ENCODE measurements at regions of chr15 and their contacts with region 1.

Region 1: DNA sequence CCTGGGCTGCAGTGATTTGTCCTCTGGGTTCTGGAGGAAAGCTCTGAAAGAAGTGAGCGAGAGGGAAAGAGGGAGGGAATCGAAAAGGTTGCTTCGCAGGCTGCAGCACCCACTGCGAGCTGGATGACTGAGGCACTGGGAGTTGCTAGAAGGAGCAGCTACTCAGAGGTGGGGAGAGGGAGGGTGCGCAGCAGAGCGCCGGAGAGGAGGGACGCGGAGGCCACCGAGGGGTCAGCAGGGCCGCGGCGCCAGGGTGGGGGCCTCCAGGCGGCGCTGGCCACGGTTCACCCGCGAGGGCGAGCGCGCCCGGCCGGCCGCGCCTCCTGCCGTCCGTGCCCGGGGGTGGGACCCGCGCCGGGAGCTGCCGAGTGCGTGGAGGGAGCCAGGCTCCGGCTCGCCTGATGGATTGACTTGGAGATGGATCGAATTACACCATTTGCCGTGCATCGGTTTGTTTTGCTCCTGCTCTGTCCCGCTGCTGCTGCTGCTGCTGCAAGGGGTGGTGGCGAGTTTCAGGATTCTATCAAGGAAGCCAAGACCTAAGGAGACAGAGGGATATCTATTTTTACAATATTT is at the start of gene SEMA6D:
- DNase-seq: peak; percentile 90
- H3K4me3 ChIP-seq: peak within 1 kb of the TSS; percentile 76
- H3K27ac ChIP-seq: peak within 1 kb of the TSS; percentile 69
- H3K4me1 ChIP-seq: peaks cover 50% of the 10 kb centered on the region
- H3K27me3 ChIP-seq: no peaks in the 10 kb centered on the region
- CTCF ChIP-seq: no peak; the same call in 1 of the 2 replicates
- total RNA-seq, gene SEMA6D: 10.9 and 11.0 TPM in 2 replicates

Region 2: GRCh38 chr15:47422901-47423665 is 294.0 kb before region 1 on chr15:
- CTCF ChIA-PET with region 1: interaction called, 3 read pairs
- POLR2A ChIA-PET with region 1: no interaction called
- intact Hi-C with region 1: loop called (anchors 5 kb)
- DNase-seq: no peak
- H3K4me3 ChIP-seq: no peak overlapping the region
- H3K27ac ChIP-seq: peak overlapping the region; percentile 84
- H3K4me1 ChIP-seq: peaks cover 68% of the 10 kb centered on the region
- H3K27me3 ChIP-seq: no peaks in the 10 kb centered on the region
- CTCF ChIP-seq: no peak

Region 3: GRCh38 chr15:47473832-47474231 is 243.3 kb before region 1 on chr15:
- CTCF ChIA-PET with region 1: interaction called, 3 read pairs
- POLR2A ChIA-PET with region 1: no interaction called
- intact Hi-C with region 1: loop called (anchors 10 kb)
- DNase-seq: no peak
- H3K4me3 ChIP-seq: no peak overlapping the region
- H3K27ac ChIP-seq: no peak overlapping the region
- H3K4me1 ChIP-seq: peaks cover 29% of the 10 kb centered on the region
- H3K27me3 ChIP-seq: no peaks in the 10 kb centered on the region
- CTCF ChIP-seq: no peak

Region 4: GRCh38 chr15:47778263-47778770 is 61.2 kb after region 1 on chr15:
- CTCF ChIA-PET with region 1: no interaction called
- POLR2A ChIA-PET with region 1: no interaction called
- intact Hi-C with region 1: loop called (anchors 2 kb)
- DNase-seq: no peak
- H3K4me3 ChIP-seq: no peak overlapping the region
- H3K27ac ChIP-seq: no peak overlapping the region
- H3K4me1 ChIP-seq: no peaks in the 10 kb centered on the region
- H3K27me3 ChIP-seq: no peaks in the 10 kb centered on the region
- CTCF ChIP-seq: no peak

Region 5: DNA sequence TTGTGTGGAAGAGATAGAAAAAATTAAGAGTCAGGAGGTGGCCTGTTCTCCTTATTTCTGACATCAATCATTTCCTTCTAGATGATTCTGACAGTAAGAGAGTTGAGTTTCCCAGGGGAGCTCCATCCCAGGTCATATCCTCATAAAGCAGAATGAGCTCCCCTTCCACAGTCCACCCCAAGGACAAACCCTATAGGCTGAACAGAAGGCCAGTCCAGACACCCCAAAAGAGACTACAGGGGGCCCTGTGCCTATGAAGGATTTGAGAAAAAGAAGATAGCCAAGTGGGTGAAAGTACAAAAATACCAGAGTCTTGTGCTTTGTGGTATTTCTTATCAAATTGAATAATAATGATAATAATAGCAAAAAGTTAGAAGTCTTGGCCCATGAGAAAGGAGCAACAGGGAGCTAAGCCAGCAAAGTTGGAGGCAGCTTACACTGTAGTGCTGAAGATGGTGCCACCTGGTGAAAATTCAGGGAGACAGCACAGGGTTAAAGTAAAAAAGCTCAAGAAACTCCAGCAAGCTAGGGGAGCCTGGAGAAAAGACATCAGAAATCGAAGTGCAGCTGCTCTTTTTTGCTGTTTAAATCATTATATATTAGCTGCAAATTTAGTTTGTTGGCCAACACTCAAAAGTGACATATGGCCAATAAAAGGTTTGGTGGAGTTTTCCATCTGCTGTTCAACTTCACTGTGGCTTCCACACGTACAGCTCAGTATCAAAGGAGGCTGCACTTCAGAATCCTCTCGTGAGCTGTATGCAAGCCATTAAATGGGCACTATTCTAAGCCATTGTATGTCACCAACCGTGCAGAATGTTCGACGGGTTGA is 367.9 kb after region 1 on chr15:
- CTCF ChIA-PET with region 1: interaction called, 4 read pairs
- POLR2A ChIA-PET with region 1: no interaction called
- intact Hi-C with region 1: loop called (anchors 10 kb)
- DNase-seq: peak; percentile 73
- H3K4me3 ChIP-seq: no peak overlapping the region
- H3K27ac ChIP-seq: no peak overlapping the region
- H3K4me1 ChIP-seq: no peaks in the 10 kb centered on the region
- H3K27me3 ChIP-seq: no peaks in the 10 kb centered on the region
- CTCF ChIP-seq: peak; percentile 75

Region 6: DNA sequence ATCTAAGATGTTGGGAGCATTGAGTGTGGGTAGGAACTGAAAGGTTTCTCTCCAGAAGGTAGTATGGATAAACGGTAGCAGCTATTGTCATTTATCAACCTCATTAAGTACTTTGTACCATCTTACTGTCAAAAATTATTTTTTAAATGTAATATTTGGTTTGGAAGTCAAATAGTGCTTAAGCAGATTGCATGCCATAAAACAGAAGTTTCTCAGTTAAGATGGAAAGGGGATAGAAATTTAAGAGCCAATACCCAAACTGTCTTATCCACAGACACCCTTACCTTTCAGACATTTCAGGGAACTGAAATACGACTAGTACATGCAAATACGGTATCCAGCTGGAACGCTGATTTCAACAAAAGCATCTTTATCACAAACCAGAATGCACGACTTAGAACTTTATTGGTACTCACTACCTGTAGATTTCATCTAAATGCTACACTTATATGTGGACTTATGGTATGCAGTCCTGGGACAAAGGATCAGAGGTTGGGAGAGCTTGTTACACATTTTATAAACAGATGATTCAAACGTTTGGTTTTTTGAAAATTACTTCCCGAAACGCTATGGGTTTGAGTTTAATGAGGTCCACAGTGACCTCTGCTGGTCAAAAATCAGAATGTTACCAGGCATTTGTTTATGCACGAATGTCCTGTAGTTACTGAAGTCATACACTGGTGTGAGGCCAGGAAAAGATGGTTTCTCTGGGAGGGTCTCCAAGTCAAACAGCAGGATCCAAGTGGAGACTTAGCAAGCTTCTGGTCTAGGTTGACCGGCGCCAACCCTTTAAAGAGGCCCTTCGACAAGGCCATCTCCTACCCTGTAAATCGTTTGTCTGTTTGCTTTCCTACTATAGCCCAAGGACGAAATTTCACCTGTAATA is 568.4 kb after region 1 on chr15:
- CTCF ChIA-PET with region 1: no interaction called
- POLR2A ChIA-PET with region 1: no interaction called
- intact Hi-C with region 1: loop called (anchors 10 kb)
- DNase-seq: peak; percentile 81
- H3K4me3 ChIP-seq: no peak overlapping the region
- H3K27ac ChIP-seq: no peak overlapping the region
- H3K4me1 ChIP-seq: peaks cover 20% of the 10 kb centered on the region
- H3K27me3 ChIP-seq: no peaks in the 10 kb centered on the region
- CTCF ChIP-seq: peak; percentile 78

Measured in A673 (cell line).